Caco-2 (cell line): ENCODE measurements at regions of chr6 and their contacts with region 1.

Region 1: GRCh38 chr6:138044458-138044857 is 62.8 kb downstream of the PERP start:
- DNase-seq: no peak
- H3K4me3 ChIP-seq: no peak overlapping the region
- H3K4me3 Mint-ChIP-seq: no peak overlapping the region
- H3K27ac Mint-ChIP-seq: no peak overlapping the region
- H3K4me1 ChIP-seq: no peaks in the 10 kb centered on the region
- H3K4me1 Mint-ChIP-seq: no peaks in the 10 kb centered on the region
- H3K27me3 ChIP-seq: no peaks in the 10 kb centered on the region
- H3K27me3 Mint-ChIP-seq: no peaks in the 10 kb centered on the region
- CTCF ChIP-seq: no peak

Region 2: DNA sequence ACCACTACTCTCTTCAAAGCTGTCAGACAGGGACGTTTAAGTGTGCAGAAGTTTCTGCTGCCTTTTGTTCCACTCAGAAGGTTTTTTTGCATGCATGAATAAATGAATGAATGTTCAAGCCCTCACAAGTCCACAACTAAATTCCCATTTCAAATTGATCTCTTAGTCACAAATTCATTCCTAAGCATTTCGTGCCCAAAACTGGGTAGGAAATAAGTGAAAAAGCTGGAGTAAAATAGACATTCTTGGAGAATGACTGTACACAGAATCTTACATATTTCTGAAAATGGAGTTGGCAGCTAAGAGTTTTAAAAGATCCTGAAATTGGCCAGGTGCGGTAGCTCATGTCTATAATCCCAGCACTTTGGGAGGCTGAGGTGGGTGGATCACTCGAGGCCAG is 54.8 kb before region 1 on chr6:
- CTCF ChIA-PET with region 1: no interaction called
- POLR2A ChIA-PET with region 1: interaction called, 10 read pairs
- intact Hi-C with region 1: no loop called
- DNase-seq: no peak
- H3K4me3 ChIP-seq: no peak overlapping the region
- H3K4me3 Mint-ChIP-seq: no peak overlapping the region
- H3K27ac Mint-ChIP-seq: no peak overlapping the region
- H3K4me1 ChIP-seq: no peaks in the 10 kb centered on the region
- H3K4me1 Mint-ChIP-seq: no peaks in the 10 kb centered on the region
- H3K27me3 ChIP-seq: no peaks in the 10 kb centered on the region
- H3K27me3 Mint-ChIP-seq: no peaks in the 10 kb centered on the region
- CTCF ChIP-seq: no peak